Activated CD8-positive, alpha-beta T cell treated with anti-CD3 and anti-CD28 coated beads for 36 hours (primary cell): ENCODE measurements at regions of chr13 and their contacts with region 1.

Region 1: DNA sequence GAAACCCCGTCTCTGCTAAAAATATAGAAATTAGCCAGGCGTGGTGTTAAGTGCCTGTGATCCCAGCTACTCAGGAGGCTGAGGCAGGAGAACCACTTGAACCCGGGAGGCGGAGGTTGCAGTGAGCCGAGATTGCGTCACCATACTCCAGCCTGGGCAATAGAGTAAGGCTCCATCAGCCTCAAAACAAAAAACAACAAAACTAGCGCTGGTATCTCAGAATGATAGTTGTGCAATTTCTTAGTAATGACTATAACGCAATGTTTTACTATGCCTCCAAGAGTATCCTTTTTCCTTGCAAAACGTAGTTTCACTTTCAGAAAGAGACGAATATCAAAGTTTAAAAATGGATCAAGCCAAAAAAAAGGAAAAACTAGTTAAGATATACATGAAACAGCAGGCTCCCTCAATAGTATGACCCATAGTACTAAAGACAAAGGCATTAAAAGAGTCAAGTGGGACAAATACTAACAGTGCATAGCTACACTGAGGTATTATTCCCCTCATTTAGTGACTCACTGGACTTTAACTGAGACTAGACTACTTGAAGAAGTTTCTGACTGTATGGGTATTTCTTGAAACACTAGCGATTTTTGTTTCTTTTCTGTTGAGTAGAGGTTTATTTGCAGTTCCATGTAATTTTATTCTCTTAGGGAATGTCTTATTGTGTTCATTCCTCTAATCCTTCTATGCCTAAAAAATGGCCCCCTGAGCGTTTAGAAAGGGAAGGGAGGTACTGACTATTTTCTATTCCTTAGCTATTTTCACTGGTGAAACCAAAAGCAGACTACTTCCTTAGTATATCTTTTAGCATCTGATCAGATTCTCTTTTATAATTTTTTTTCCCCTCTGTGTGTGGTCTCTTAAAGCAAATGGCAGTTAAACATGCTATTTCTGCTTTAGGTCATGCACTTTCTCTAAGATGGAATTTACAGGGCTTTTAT is 10.4 kb upstream of the ITM2B start:
- DNase-seq: no peak
- ATAC-seq: peak; percentile 67
- H3K4me3 Mint-ChIP-seq: peak overlapping the region; percentile 61
- H3K27ac Mint-ChIP-seq: peak overlapping the region; percentile 94
- H3K4me1 Mint-ChIP-seq: peaks cover 50% of the 10 kb centered on the region
- H3K27me3 Mint-ChIP-seq: no peaks in the 10 kb centered on the region
- CTCF ChIP-seq: no peak

Region 2: GRCh38 chr13:48155848-48156247 is 66.8 kb before region 1 on chr13:
- CTCF ChIA-PET with region 1: interaction called, 8 read pairs
- POLR2A ChIA-PET with region 1: no interaction called
- intact Hi-C with region 1: loop called (anchors 5 kb)
- DNase-seq: peak; percentile 38
- ATAC-seq: peak; percentile 65
- H3K4me3 Mint-ChIP-seq: peak overlapping the region; percentile 67
- H3K27ac Mint-ChIP-seq: peak overlapping the region; percentile 97
- H3K4me1 Mint-ChIP-seq: peaks cover 84% of the 10 kb centered on the region
- H3K27me3 Mint-ChIP-seq: no peaks in the 10 kb centered on the region
- CTCF ChIP-seq: no peak

Region 3: DNA sequence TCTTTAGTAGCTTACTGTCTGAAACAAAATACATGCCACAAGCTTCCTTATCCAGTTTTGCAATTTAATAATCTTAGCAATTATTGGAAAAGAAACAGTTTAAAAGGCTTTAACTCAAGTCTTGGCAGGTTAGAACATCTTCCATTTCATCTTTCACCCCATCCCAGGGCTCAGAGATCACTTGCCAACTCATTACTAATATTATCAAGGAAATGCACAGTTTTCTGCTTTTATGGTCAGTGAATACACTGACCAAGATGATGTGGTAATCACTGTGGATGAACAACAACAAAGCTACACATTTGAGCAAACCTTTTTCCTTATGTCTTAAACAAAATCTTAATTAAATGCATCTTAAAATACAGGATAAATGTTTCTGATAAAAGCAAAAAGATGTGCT is 37.6 kb before region 1 on chr13:
- CTCF ChIA-PET with region 1: no interaction called
- POLR2A ChIA-PET with region 1: interaction called, 6 read pairs
- intact Hi-C with region 1: loop called (anchors 5 kb)
- DNase-seq: no peak
- ATAC-seq: no peak
- H3K4me3 Mint-ChIP-seq: peak overlapping the region; percentile 11
- H3K27ac Mint-ChIP-seq: peak overlapping the region; percentile 82
- H3K4me1 Mint-ChIP-seq: peaks cover 60% of the 10 kb centered on the region
- H3K27me3 Mint-ChIP-seq: no peaks in the 10 kb centered on the region
- CTCF ChIP-seq: no peak